Activated naive CD4-positive, alpha-beta T cell treated with anti-CD3 and anti-CD28 coated beads, Interleukin-2, amount 10 ng/mL, durations not matched to agents 7 days and 5 days (primary cell): ENCODE measurements at regions of chr16 and their contacts with region 1.

Region 1: GRCh38 chr16:28277537-28278388 is 14.6 kb upstream of the SBK1 start:
- DNase-seq: peak; percentile 87
- H3K4me3 Mint-ChIP-seq: peak overlapping the region; percentile 66
- H3K27ac Mint-ChIP-seq: peak overlapping the region; percentile 91
- H3K4me1 Mint-ChIP-seq: peaks cover 42% of the 10 kb centered on the region
- H3K27me3 Mint-ChIP-seq: peaks cover 55% of the 10 kb centered on the region

Region 2: DNA sequence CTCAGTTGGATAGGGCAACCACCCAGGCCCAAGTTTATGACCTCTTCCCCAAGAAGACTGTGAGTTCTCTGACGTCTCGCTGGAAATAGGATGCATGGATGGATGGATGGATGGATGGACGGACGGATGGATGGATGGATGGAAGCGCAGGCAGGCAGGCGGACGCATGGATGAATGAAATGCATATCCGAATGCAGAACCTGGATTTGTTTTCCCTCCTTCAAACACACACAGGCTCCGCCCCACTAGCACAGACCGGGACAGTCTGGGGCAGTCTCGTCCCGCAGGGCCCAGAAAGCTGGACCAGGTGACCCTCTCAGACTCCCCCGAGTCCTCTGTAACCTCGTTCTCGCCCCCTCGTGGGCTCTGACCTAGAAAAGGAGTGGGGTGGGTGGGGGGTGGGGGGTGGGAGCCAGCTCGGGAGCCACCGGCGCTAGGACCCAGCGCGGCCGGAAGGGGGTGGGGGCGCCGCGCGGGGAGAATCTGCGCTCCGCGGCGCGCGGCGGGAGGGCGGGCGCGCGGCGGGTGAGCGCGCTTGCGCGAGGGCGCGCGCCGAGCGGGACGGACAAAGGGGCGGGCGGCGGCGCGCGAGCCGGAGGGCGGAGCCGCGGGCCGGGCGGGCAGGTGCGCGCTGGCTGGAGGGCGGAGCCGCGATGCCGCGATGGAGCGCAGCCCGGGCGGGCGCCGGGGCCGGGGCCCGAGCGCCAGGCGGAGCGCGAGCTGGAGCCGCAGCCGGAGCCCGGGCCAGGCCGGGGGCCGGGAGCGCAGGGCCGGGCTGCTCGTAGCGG is 14.3 kb after region 1 on chr16 and contains the start of gene SBK1:
- CTCF ChIA-PET with region 1: interaction called, 11 read pairs
- DNase-seq: peak; percentile 85
- H3K4me3 Mint-ChIP-seq: peak within 1 kb of the TSS; percentile 84
- H3K27ac Mint-ChIP-seq: peak within 1 kb of the TSS; percentile 64
- H3K4me1 Mint-ChIP-seq: peaks cover 67% of the 10 kb centered on the region
- H3K27me3 Mint-ChIP-seq: peaks cover 59% of the 10 kb centered on the region

Region 3: GRCh38 chr16:28309811-28310311 is 32.1 kb after region 1 on chr16:
- CTCF ChIA-PET with region 1: interaction called, 109 read pairs
- DNase-seq: peak; percentile 88
- H3K4me3 Mint-ChIP-seq: peak overlapping the region; percentile 35
- H3K27ac Mint-ChIP-seq: peak overlapping the region; percentile 94
- H3K4me1 Mint-ChIP-seq: peaks cover 49% of the 10 kb centered on the region
- H3K27me3 Mint-ChIP-seq: no peaks in the 10 kb centered on the region

Region 4: DNA sequence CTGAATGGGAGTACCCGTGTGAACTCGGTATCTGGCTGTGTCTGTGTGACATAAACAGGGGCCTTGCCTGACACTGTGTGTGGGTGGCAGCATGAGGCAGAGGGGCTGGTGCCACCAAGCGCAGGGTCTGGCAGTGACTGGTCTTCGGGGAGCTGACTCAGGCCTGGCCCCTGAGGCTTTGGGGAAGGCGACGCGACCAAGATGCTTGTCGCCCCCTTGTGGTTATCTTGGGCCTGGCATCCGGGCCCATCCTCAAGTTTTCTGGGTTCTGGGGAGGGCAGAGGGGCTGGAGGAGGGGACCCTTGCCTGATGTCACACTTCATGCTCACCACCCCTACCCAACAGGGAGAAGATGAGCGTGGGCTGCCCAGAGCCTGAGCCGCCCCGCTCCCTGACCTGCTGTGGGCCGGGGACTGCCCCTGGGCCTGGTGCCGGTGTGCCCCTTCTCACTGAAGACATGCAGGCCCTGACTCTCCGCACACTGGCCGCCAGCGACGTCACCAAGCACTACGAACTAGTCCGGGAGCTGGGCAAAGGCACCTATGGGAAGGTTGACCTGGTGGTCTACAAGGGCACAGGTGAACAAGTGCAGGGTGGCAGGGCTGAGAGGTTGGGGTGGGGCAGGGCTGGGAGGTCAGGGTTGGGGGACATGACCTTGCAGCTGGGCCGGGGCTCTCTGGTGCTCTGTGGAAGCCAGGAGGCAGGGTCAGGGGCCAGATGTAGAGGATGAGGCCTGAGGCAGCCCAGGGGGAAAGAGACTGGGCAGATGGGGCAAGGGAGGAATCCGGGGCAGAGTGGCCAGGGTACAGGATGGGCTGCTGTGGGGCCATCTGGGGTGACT is 39.5 kb after region 1 on chr16:
- CTCF ChIA-PET with region 1: interaction called, 109 read pairs
- DNase-seq: peak; percentile 80
- H3K4me3 Mint-ChIP-seq: no peak overlapping the region
- H3K27ac Mint-ChIP-seq: no peak overlapping the region
- H3K4me1 Mint-ChIP-seq: peaks cover 13% of the 10 kb centered on the region
- H3K27me3 Mint-ChIP-seq: no peaks in the 10 kb centered on the region